Stomach (tissue), 19 donors: ENCODE measurements at regions of chr12 and their contacts with region 1.

Region 1: GRCh38 chr12:26940516-26941214 is 2.4 kb downstream of the FGFR1OP2 start:
- DNase-seq: peak in 1 of 2 donors; percentile 7
- H3K4me3 ChIP-seq: peak overlapping the region in 2 of 4 donors; percentile 86 to 87
- H3K27ac ChIP-seq: peak overlapping the region in 1 of 5 donors; percentile 48
- H3K4me1 ChIP-seq: peaks cover 22 to 65% (median 43%) of the 10 kb centered on the region in 4 donors
- H3K27me3 ChIP-seq: no peaks in the 10 kb centered on the region
- CTCF ChIP-seq: no peak
- EP300 ChIP-seq: no peak
- POLR2A ChIP-seq: no peak

Region 2: DNA sequence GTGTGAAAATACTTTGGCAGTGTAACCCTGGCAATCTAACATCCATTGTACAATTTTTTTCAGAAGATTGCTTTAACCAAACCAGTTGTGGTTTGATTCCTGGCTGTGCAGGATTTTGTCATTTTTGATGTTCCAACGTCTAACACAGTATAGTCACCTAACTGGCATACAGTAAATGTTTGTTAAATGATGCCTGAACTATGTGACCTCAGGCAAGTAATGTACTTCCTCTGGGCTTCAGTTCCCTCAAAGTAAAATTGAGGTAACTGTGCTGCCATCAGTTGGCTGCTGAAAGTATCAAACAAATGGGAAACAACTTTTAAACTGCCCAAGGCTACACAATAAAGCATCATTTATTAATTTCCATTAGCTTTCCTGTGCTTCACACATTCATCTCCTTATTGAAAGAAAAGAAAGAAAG is 69.2 kb after region 1 on chr12:
- intact Hi-C with region 1: loop called (anchors 10 kb)
- DNase-seq: no peak
- H3K4me3 ChIP-seq: no peak overlapping the region
- H3K27ac ChIP-seq: no peak overlapping the region
- H3K4me1 ChIP-seq: peaks cover 14 to 78% (median 37%) of the 10 kb centered on the region in 4 donors
- H3K27me3 ChIP-seq: no peaks in the 10 kb centered on the region
- CTCF ChIP-seq: no peak
- EP300 ChIP-seq: no peak
- POLR2A ChIP-seq: no peak